Cardiac septum (tissue), 1 donor: ENCODE measurements at regions of chr3 and their contacts with region 1.

Region 1: DNA sequence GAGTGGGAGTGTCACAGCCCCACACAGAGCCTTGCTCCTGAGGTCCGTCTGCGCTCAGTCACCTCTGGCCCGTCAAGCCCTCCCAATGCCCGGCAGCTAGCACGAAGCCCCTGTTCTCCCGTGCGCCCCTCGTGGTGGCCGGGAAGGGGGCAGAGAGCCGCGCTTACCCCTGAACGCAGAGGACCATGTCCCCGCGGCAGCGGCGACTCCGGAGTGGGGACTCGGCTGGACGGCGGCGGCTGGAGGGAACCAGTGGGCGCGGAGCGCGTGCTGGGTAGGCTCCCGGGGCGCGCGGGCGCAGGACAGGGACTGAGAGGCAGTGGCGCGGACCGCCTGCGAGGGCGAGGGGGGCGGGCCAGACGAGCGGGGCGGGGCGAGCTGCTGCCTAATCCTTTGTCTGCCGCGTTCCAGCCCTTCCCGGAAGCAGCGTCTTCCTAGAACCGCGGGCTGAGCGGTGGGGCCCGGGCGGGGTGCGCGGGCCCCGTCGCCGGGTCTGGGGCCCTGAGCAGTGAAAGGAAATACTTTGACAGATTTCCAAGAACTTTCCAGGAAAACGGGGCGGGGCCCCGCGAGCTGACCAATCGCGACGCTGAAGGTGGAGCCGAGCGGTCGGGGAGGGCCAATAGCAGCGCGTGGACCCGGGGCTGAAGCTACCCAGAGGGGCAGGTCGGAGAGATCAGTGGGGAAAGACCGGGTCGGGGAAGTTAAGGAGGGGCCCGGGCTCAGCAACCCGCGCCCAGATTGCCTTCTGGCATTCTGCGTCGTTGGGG is at the start of gene CISH:
- DNase-seq: peak; percentile 97
- total RNA-seq, gene CISH: 21.1 TPM

Region 2: GRCh38 chr3:50350527-50351322 is 260.9 kb before region 1 on chr3 and contains the starts of genes CYB561D2 and NPRL2:
- intact Hi-C with region 1: loop called (anchors 5 kb)
- DNase-seq: peak; percentile 100
- total RNA-seq, gene CYB561D2: 6.4 TPM
- total RNA-seq, gene NPRL2: 19.1 TPM

Region 3: DNA sequence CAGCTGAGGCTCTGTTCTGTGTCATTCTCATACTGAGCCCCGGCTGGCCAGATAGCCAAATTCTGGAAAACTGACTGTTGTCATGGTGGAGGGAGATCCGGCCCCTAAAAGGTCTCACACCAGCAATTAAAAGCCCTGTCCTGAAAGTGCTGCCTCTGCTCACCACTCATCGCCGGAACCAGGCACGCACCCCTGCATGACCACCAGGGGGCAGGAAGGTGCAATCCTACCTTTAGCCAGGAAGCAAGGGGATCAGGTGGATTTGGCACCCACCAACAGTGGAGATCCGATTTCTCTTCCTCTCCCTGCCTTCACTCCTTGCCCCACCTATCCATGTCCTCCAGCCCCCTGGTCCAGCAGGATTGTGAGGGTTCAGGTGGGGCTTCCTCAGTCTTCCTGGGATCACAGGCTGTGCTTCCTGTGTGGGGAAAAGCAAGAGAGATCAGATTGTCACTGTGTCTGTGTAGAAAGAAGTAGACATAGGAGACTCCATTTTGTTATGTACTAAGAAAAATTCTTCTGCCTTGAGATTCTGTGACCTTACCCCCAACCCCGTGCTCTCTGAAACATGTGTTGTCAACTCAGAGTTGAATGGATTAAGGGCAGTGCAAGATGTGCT is 92.1 kb before region 1 on chr3:
- intact Hi-C with region 1: loop called (anchors 5 kb)
- DNase-seq: no peak

Region 4: DNA sequence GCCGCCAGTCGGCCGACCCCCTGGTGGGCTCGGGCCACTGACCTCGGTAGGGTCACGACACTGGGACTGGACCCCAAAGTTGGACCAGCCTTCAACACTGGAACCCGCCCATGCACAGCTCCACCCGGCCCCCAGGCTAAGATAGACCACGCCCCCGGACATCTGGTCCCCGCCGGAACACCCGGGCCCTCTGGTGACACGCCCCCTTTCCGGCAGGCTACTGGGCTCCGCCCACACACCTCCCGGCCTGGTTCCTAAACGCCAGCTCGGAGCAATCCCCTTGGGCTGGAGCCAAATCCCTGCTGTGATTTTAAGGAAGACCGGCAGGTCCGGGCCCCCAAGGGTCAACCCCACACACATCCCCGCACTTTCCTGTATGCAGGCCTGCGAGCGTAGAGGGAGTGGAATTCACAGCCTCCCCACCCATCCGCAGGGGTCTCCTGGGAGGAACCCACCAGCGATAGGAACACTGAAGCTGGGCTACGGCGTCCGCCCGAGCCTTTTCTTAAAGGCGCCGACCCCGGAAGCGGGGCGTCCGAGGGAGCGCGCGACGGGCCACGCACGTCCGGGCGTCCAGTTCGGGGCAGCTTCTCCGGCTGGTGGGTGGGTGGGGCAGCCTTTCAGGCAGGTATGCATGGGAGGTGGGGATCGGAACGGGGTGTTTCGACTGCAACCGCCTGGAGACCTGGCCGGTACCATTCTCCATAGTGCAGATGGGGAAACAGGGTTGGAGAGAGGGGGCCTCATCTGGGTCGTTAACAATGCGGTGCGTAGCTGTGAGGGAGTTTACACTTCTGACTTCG is 42.5 kb before region 1 on chr3 and contains the start of gene HEMK1:
- intact Hi-C with region 1: loop called (anchors 1 kb)
- DNase-seq: peak; percentile 98
- total RNA-seq, gene HEMK1: 14.4 TPM

Region 5: GRCh38 chr3:51384726-51385473 is 773.3 kb after region 1 on chr3 and contains the start of gene MANF:
- intact Hi-C with region 1: loop called (anchors 5 kb)
- DNase-seq: peak; percentile 99
- total RNA-seq, gene MANF: 77.6 TPM